ENCODE measurements at regions of chr2 and their contacts with region 1.

Region 1: DNA sequence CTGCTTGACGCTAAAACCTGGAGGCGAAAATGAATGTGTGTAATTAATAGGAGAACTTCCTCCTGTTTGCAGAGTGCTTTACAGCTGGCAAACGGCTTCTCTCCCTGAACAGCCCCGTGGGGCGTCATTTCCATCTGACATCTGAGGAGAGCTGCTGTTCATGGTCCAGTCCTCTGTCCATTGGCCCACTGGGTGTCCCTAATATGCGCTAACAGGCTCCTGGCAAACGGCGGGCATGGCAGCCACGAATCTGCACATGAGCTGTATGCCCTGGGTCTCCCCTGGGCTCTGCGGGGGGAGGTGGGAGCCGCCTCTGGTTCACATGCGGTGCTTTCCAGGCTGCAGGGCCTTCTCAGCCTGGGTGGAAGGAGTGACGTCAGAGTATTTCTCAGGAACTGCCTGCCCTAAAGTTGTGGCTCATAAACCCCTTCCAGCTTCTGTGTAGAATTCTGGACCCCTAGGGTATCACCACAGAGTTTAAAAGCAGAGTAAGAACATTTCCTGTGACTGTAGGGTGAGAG is 73.2 kb downstream of the LRRFIP1 start:
- DNase-seq: peak; percentile 29
- H3K4me3 ChIP-seq: peak overlapping the region; percentile 34
- H3K27ac ChIP-seq: peak overlapping the region; percentile 43
- H3K4me1 ChIP-seq: peaks cover 83% of the 10 kb centered on the region
- CTCF ChIP-seq: no peak

Region 2: GRCh38 chr2:237581751-237582746 is 118.5 kb before region 1 on chr2:
- CTCF ChIA-PET with region 1: no interaction called
- POLR2A ChIA-PET with region 1: no interaction called
- intact Hi-C with region 1: no loop called
- DNase-seq: peak; percentile 62
- H3K4me3 ChIP-seq: no peak overlapping the region
- H3K27ac ChIP-seq: no peak overlapping the region
- H3K4me1 ChIP-seq: no peaks in the 10 kb centered on the region
- CTCF ChIP-seq: peak; percentile 70

Region 3: GRCh38 chr2:237686659-237687136 is 13.9 kb before region 1 on chr2:
- CTCF ChIA-PET with region 1: interaction called, 3 read pairs
- POLR2A ChIA-PET with region 1: interaction called, 11 read pairs
- intact Hi-C with region 1: no loop called
- DNase-seq: no peak
- H3K4me3 ChIP-seq: no peak overlapping the region
- H3K27ac ChIP-seq: no peak overlapping the region
- H3K4me1 ChIP-seq: peaks cover 27% of the 10 kb centered on the region
- CTCF ChIP-seq: peak; percentile 64

Region 4: DNA sequence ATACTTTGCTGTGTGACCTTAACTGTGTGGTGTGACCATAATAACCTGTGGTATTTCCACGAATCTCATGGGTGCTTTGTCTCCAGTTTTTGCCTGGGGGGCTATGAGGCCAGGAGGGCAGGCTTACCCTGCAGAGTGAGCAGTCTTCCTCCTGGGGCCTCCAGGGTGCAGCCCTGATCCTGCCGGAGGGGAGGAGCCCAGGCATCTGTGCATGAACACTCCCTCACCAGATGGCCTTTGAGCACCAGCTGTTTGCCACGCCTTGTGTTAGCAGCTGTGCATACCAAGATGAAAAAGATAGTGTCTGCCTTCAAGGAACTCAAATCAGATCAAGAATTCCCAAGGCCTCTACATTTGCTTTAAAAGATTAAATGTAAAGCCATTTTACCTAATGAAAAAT is 23.0 kb after region 1 on chr2:
- CTCF ChIA-PET with region 1: no interaction called
- POLR2A ChIA-PET with region 1: interaction called, 4 read pairs
- intact Hi-C with region 1: loop called (anchors 1 kb)
- DNase-seq: peak; percentile 70
- H3K4me3 ChIP-seq: no peak overlapping the region
- H3K27ac ChIP-seq: no peak overlapping the region
- H3K4me1 ChIP-seq: peaks cover 13% of the 10 kb centered on the region
- CTCF ChIP-seq: peak; percentile 22; the same call in 1 of the 2 replicates